ENCODE measurements at regions of chr1 and their contacts with region 1.

Region 1: GRCh38 chr1:6475381-6476133 is 9.6 kb upstream of the TNFRSF25 start:
- DNase-seq: peak; percentile 76 to 84 (median 79)
- H3K4me3 ChIP-seq: no peak overlapping the region
- H3K4me3 Mint-ChIP-seq: peak overlapping the region in 2 of 8 donors; percentile 35 to 49
- H3K27ac ChIP-seq: no peak overlapping the region
- H3K27ac Mint-ChIP-seq: peak overlapping the region in 2 of 7 donors; percentile 18 to 27
- H3K4me1 ChIP-seq: peaks cover 5% of the 10 kb centered on the region
- H3K4me1 Mint-ChIP-seq: peaks cover 2 to 8% (median 5%) of the 10 kb centered on the region in 4 donors
- H3K27me3 ChIP-seq: no peaks in the 10 kb centered on the region
- H3K27me3 Mint-ChIP-seq: no peaks in the 10 kb centered on the region

Region 2: DNA sequence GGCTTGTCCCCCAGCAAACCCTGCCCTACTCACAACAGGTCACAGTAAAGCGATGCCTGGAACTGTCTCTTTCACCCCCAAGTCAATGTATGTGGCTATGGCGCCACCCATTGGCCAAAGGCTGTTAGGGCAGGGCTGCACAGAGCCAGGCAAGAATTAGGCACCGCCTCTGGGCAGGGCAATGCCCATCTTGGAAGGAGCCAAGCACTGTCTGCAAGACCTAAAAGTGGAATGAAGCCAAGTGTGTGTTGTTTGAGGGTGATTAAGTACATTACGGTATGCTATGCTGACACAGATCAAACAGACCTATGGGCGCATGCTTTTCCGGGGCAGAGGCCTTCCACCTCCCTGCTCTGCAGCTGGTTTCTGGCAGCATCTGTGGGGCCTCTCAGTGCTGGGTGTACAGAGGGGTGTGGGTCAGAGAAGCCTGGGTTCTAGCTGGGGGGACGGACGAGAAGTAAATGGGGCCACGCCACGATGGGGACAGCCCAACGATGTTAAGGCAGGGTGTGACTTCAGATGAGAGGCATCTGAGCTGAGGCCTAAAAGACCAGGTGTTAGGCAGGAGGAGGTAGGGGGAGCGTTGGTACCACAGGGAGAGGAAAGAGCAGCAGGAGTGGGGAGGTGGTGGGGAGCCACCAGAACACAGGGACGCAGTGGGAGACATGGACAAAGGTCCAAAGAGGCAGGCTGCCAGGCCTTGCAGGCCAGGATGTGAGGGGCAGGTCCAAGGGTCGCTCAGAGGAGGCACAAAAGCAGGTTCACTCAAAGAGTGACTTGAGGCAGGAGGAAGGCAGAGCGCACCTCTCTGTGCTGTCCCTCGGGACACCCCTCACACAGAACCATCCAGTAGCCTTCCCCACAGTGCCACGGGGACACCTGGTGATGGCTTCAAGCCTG is 131.8 kb before region 1 on chr1:
- CTCF ChIA-PET with region 1: no interaction called
- POLR2A ChIA-PET with region 1: no interaction called
- intact Hi-C with region 1: loop called (anchors 1 kb)
- DNase-seq: peak; percentile 50 to 56 (median 51)
- H3K4me3 ChIP-seq: no peak overlapping the region
- H3K4me3 Mint-ChIP-seq: peak overlapping the region in 1 of 8 donors; percentile 37
- H3K27ac ChIP-seq: no peak overlapping the region
- H3K27ac Mint-ChIP-seq: peak overlapping the region in 2 of 7 donors; percentile 29 to 84
- H3K4me1 ChIP-seq: peaks cover 13% of the 10 kb centered on the region
- H3K4me1 Mint-ChIP-seq: peaks cover 8 to 20% (median 11%) of the 10 kb centered on the region in 4 donors
- H3K27me3 ChIP-seq: no peaks in the 10 kb centered on the region
- H3K27me3 Mint-ChIP-seq: no peaks in the 10 kb centered on the region

Region 3: DNA sequence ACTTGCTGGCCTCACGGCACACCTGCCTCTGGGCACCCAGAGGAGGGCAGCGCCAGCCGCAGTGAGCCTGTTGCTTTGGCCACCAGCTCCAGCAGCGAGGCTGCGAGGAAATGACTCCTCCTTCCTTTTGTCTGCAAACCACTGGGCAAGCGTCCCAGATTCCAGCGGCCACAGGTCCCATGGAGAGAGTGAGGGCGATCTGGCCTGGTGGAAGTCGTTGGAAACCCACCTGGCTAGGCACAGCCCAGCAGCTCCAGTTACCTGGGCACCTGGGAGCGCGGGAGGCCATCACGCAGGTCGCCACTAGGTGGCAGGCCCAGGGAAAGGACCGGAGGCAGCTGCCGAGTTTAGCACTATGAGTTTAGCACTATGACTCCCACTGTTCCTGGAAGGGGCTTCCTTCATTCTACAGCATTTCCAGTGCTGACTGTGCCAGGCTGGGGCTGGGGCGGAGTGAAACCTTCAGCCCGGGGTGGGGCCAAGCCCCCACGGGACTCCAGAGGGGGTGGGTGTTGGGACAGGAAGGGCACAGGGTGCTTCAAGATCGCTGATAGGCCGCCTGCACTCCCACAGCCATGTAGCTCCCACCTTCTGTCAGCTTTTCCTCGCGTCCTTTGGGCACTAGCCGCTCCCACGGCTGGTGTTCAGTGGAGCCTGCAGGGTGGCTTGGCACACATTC is 52.1 kb before region 1 on chr1:
- CTCF ChIA-PET with region 1: interaction called, 7 read pairs
- POLR2A ChIA-PET with region 1: interaction called, 3 read pairs
- intact Hi-C with region 1: loop called (anchors 1 kb)
- DNase-seq: peak; percentile 64 to 74 (median 69)
- H3K4me3 ChIP-seq: peak overlapping the region in 1 of 2 donors; percentile 38
- H3K4me3 Mint-ChIP-seq: peak overlapping the region; percentile 46 to 76 (median 68)
- H3K27ac ChIP-seq: no peak overlapping the region
- H3K27ac Mint-ChIP-seq: no peak overlapping the region
- H3K4me1 ChIP-seq: peaks cover 35% of the 10 kb centered on the region
- H3K4me1 Mint-ChIP-seq: peaks cover 6 to 35% (median 19%) of the 10 kb centered on the region in 4 donors
- H3K27me3 ChIP-seq: peaks cover 37% of the 10 kb centered on the region
- H3K27me3 Mint-ChIP-seq: peaks cover 22 to 24% of the 10 kb centered on the region in 2 donors

Region 4: GRCh38 chr1:6448749-6449631 is 26.6 kb before region 1 on chr1:
- CTCF ChIA-PET with region 1: interaction called, 10 read pairs
- POLR2A ChIA-PET with region 1: interaction called, 8 read pairs
- intact Hi-C with region 1: loop called (anchors 1 kb)
- DNase-seq: peak in 2 of 5 donors; percentile 37 to 70
- H3K4me3 ChIP-seq: no peak overlapping the region
- H3K4me3 Mint-ChIP-seq: peak overlapping the region in 6 of 8 donors; percentile 42 to 84 (median 60)
- H3K27ac ChIP-seq: no peak overlapping the region
- H3K27ac Mint-ChIP-seq: peak overlapping the region in 6 of 7 donors; percentile 23 to 86 (median 70)
- H3K4me1 ChIP-seq: peaks cover 32% of the 10 kb centered on the region
- H3K4me1 Mint-ChIP-seq: peaks cover 15 to 39% (median 28%) of the 10 kb centered on the region in 4 donors
- H3K27me3 ChIP-seq: peaks cover 11% of the 10 kb centered on the region
- H3K27me3 Mint-ChIP-seq: peaks cover 25 to 32% of the 10 kb centered on the region in 2 donors

Region 5: DNA sequence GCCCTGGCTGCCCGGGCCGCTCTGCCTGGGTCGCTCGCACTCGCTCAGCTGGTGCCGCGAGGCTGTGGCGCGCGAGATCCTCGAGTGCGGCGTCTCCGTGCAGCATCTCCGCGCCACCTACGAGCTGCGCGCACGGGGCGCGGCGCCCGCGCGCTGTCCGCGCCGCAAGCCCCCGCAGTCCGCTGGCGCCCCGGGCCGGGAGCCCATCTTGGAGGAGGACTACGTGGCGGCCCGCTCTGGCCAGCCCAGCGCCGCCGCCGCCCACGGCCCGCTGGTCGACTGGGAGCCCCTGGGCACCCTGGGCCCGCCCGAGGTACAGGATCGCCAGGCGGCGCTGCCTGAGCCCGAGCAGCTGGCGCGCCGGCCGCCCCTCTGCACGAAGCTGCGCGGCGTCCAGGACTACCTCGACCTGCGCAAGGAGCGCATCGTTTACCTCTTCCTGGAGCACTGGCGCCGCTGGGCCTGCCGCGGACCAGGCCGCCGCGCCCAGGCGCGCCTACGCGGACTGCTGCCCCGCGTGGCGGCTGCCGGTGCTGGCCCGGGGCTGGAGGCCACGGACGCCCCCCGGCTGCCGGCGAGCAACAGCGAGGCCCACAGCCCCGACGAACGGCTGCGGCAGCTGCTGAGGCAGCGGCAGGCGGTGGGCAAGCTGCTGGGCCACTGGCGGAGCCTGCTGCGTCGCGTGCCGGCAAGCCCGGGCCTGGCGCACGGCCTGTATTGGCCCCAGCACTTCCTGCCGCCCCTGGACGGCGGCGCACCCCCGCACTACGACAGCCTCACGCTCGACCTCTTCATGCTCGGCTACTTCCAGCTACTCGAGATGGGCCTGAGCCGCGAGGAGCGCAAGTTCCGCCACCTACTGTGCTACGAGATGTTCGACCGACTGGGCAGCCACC is 20.5 kb before region 1 on chr1:
- CTCF ChIA-PET with region 1: interaction called, 11 read pairs
- POLR2A ChIA-PET with region 1: interaction called, 40 read pairs
- intact Hi-C with region 1: loop called (anchors 1 kb)
- DNase-seq: peak; percentile 56 to 62 (median 60)
- H3K4me3 ChIP-seq: no peak overlapping the region
- H3K4me3 Mint-ChIP-seq: peak overlapping the region in 3 of 8 donors; percentile 49 to 70 (median 61)
- H3K27ac ChIP-seq: no peak overlapping the region
- H3K27ac Mint-ChIP-seq: peak overlapping the region in 1 of 7 donors; percentile 61
- H3K4me1 ChIP-seq: peaks cover 10% of the 10 kb centered on the region
- H3K4me1 Mint-ChIP-seq: peaks cover 13 to 39% (median 27%) of the 10 kb centered on the region in 4 donors
- H3K27me3 ChIP-seq: no peaks in the 10 kb centered on the region
- H3K27me3 Mint-ChIP-seq: peaks cover 10 to 13% of the 10 kb centered on the region in 2 donors

Region 6: DNA sequence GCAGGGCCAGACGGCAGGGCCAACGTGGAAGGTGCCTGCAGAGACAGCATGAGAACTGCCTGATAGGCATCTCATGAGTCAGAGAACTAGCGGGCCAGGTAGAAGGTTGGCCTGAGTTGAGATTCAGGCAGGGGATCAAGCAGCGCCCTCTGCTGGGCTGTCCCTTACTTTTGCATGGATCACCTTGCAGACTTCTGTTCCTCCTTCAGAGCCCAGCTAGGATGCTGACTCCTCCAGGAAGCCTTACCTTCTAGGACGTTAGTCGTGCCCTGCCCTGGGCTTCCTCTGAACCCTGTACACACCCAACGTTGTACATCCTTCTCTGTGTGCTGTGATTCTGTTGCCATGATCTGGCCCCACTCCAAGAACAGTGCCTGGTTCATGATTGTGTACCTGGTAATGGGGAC is 1064.2 kb after region 1 on chr1:
- CTCF ChIA-PET with region 1: no interaction called
- POLR2A ChIA-PET with region 1: no interaction called
- intact Hi-C with region 1: no loop called
- DNase-seq: no peak
- H3K4me3 ChIP-seq: no peak overlapping the region
- H3K4me3 Mint-ChIP-seq: no peak overlapping the region
- H3K27ac ChIP-seq: no peak overlapping the region
- H3K27ac Mint-ChIP-seq: no peak overlapping the region
- H3K4me1 ChIP-seq: no peaks in the 10 kb centered on the region
- H3K4me1 Mint-ChIP-seq: no peaks in the 10 kb centered on the region
- H3K27me3 ChIP-seq: no peaks in the 10 kb centered on the region
- H3K27me3 Mint-ChIP-seq: peaks cover 8 to 12% of the 10 kb centered on the region in 2 donors